CD4-positive, alpha-beta memory T cell (primary cell): ENCODE measurements at regions of chr11 and their contacts with region 1.

Region 1: GRCh38 chr11:87290304-87290922 is 252.7 kb downstream of the TMEM135 start:
- DNase-seq: peak in 4 of 5 donors; percentile 33 to 54 (median 44)
- H3K4me3 ChIP-seq: no peak overlapping the region
- H3K4me3 Mint-ChIP-seq: no peak overlapping the region
- H3K27ac ChIP-seq: no peak overlapping the region
- H3K27ac Mint-ChIP-seq: no peak overlapping the region
- H3K4me1 ChIP-seq: no peaks in the 10 kb centered on the region
- H3K4me1 Mint-ChIP-seq: no peaks in the 10 kb centered on the region
- H3K27me3 ChIP-seq: no peaks in the 10 kb centered on the region
- H3K27me3 Mint-ChIP-seq: no peaks in the 10 kb centered on the region

Region 2: GRCh38 chr11:85989746-85990145 is 1300.7 kb before region 1 on chr11:
- CTCF ChIA-PET with region 1: no interaction called
- POLR2A ChIA-PET with region 1: no interaction called
- intact Hi-C with region 1: no loop called
- DNase-seq: no peak
- H3K4me3 ChIP-seq: no peak overlapping the region
- H3K4me3 Mint-ChIP-seq: no peak overlapping the region
- H3K27ac ChIP-seq: no peak overlapping the region
- H3K27ac Mint-ChIP-seq: peak overlapping the region in 3 of 7 donors; percentile 8 to 81 (median 14)
- H3K4me1 ChIP-seq: no peaks in the 10 kb centered on the region
- H3K4me1 Mint-ChIP-seq: peaks cover 10 to 24% (median 16%) of the 10 kb centered on the region in 4 donors
- H3K27me3 ChIP-seq: no peaks in the 10 kb centered on the region
- H3K27me3 Mint-ChIP-seq: no peaks in the 10 kb centered on the region

Region 3: DNA sequence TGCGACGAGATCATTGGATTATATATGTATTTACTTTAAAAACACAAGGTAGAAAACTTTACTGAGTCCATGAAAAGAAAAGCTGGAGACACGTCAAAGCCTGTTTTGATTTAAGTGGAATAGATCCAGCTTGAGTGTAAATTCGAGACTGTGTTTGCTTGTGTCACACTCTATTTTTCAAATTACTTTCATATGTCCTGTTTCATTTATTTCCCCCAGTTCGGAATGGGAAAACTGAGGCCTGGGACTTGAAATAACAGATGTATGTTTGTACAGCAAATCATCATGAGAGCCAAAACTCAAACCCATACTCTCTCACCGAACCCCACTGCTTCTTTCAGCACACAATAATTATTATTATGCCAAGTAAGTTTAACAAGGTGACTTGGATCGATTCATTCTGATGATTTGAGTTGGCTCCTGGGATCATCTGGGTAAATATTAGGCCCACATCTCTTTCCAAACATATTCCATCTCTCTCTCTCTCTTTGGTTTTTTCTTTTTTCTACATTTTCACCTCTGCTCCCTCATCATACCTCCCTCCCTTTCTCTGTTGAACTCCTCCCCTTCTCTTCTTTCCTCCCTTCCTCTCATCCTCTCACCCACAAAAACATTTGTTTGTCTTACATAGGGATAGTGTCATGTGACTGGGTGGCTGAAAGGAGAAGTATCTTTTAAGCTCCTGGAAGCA is 356.4 kb before region 1 on chr11:
- CTCF ChIA-PET with region 1: interaction called, 86 read pairs
- POLR2A ChIA-PET with region 1: no interaction called
- intact Hi-C with region 1: loop called (anchors 1 kb)
- DNase-seq: no peak
- H3K4me3 ChIP-seq: no peak overlapping the region
- H3K4me3 Mint-ChIP-seq: no peak overlapping the region
- H3K27ac ChIP-seq: no peak overlapping the region
- H3K27ac Mint-ChIP-seq: peak overlapping the region in 1 of 7 donors; percentile 5
- H3K4me1 ChIP-seq: no peaks in the 10 kb centered on the region
- H3K4me1 Mint-ChIP-seq: peaks cover 0 to 9% (median 0%) of the 10 kb centered on the region in 4 donors
- H3K27me3 ChIP-seq: no peaks in the 10 kb centered on the region
- H3K27me3 Mint-ChIP-seq: peaks cover 3 to 5% of the 10 kb centered on the region in 2 donors

Region 4: GRCh38 chr11:86977441-86978050 is 312.9 kb before region 1 on chr11:
- CTCF ChIA-PET with region 1: interaction called, 14 read pairs
- POLR2A ChIA-PET with region 1: no interaction called
- intact Hi-C with region 1: no loop called
- DNase-seq: no peak
- H3K4me3 ChIP-seq: no peak overlapping the region
- H3K4me3 Mint-ChIP-seq: no peak overlapping the region
- H3K27ac ChIP-seq: no peak overlapping the region
- H3K27ac Mint-ChIP-seq: no peak overlapping the region
- H3K4me1 ChIP-seq: no peaks in the 10 kb centered on the region
- H3K4me1 Mint-ChIP-seq: no peaks in the 10 kb centered on the region
- H3K27me3 ChIP-seq: no peaks in the 10 kb centered on the region
- H3K27me3 Mint-ChIP-seq: peaks cover 0 to 3% of the 10 kb centered on the region in 2 donors

Region 5: GRCh38 chr11:87201376-87201775 is 89.0 kb before region 1 on chr11:
- CTCF ChIA-PET with region 1: no interaction called
- POLR2A ChIA-PET with region 1: no interaction called
- intact Hi-C with region 1: no loop called
- DNase-seq: no peak
- H3K4me3 ChIP-seq: no peak overlapping the region
- H3K4me3 Mint-ChIP-seq: no peak overlapping the region
- H3K27ac ChIP-seq: no peak overlapping the region
- H3K27ac Mint-ChIP-seq: no peak overlapping the region
- H3K4me1 ChIP-seq: no peaks in the 10 kb centered on the region
- H3K4me1 Mint-ChIP-seq: peaks cover 0 to 8% (median 1%) of the 10 kb centered on the region in 4 donors
- H3K27me3 ChIP-seq: no peaks in the 10 kb centered on the region
- H3K27me3 Mint-ChIP-seq: no peaks in the 10 kb centered on the region

Region 6: DNA sequence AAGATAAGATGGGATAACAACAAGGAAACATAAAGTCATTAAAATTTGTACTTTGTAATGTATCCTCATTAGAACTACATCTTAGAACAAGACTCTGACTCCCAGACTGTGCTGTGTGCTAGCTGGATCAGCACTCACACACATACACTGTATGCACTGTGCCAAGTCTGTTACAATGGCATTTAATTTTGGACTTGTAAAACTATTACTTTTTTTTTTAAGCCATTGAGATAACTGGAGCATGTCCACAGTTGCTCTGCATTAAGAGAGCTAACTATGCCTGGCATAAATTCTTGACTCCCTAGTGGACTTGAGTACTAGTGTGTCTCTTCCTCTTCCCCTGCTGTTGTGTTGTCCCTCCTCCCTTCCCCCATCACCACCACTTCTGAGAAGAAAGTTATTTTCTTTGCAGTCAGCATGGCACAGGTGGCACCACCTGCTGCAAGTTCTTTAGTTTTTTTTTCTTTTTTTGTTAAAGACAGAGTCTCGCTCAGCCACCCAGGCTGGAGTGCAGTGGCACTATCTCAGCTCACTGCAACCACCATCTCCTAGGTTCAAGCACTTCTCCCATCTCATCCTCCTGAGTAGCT is 15.9 kb after region 1 on chr11:
- CTCF ChIA-PET with region 1: no interaction called
- POLR2A ChIA-PET with region 1: no interaction called
- intact Hi-C with region 1: no loop called
- DNase-seq: no peak
- H3K4me3 ChIP-seq: no peak overlapping the region
- H3K4me3 Mint-ChIP-seq: no peak overlapping the region
- H3K27ac ChIP-seq: no peak overlapping the region
- H3K27ac Mint-ChIP-seq: no peak overlapping the region
- H3K4me1 ChIP-seq: no peaks in the 10 kb centered on the region
- H3K4me1 Mint-ChIP-seq: no peaks in the 10 kb centered on the region
- H3K27me3 ChIP-seq: no peaks in the 10 kb centered on the region
- H3K27me3 Mint-ChIP-seq: no peaks in the 10 kb centered on the region

Region 7: DNA sequence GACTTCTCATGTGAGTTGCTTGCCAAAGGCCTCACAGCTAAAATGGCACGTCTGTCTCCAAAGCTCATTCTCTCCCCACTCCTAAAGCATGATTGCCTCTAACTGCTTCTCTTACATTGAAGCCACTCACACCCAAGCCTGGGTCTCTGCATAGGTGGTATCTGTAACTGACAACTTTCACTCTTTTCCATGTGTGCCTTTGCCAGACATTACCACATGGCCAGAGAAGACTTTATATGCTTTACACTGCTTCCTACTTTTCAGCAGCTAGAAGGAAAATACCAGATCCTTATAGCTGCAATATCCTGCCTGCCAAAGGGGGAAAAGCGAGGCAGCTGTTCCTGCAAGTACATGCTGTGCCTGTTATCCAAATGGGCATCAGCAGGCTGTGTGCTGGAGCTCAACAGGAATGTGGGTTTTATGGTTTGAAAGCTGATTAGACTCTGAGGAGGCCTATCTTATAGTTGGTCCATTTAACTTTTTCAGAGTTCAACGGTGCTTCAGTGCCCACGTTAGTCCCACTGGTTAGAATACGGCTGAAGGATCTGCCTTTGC is 337.7 kb after region 1 on chr11:
- CTCF ChIA-PET with region 1: no interaction called
- POLR2A ChIA-PET with region 1: no interaction called
- intact Hi-C with region 1: no loop called
- DNase-seq: no peak
- H3K4me3 ChIP-seq: no peak overlapping the region
- H3K4me3 Mint-ChIP-seq: no peak overlapping the region
- H3K27ac ChIP-seq: no peak overlapping the region
- H3K27ac Mint-ChIP-seq: no peak overlapping the region
- H3K4me1 ChIP-seq: no peaks in the 10 kb centered on the region
- H3K4me1 Mint-ChIP-seq: no peaks in the 10 kb centered on the region
- H3K27me3 ChIP-seq: no peaks in the 10 kb centered on the region
- H3K27me3 Mint-ChIP-seq: no peaks in the 10 kb centered on the region